Adrenal gland (tissue), 19 donors: ENCODE measurements at regions of chr2 and their contacts with region 1.

Region 1: DNA sequence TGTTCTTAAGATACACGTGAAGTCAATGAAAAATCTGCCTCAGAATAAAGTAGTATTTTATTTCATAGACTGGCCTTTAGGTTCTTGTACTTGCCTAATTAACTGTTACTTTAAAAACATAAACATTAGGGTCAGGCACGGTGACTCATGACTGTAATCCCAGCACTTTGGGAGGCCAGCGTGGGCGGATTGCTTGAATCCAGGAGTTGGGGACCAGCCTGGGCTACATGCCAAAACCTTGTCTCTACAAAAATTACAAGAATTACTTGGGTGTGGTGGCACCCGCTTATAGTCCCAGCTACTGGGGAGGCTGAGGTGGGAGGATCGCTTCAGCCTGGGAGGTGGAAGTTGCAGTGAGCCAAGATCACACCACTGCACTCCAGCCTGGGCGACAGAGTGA is 16.0 kb upstream of the SNORC start:
- DNase-seq: peak in 3 of 7 donors; percentile 51 to 54 (median 54)
- H3K4me3 ChIP-seq: no peak overlapping the region
- H3K27ac ChIP-seq: peak overlapping the region in 1 of 5 donors; percentile 18
- H3K4me1 ChIP-seq: no peaks in the 10 kb centered on the region
- H3K27me3 ChIP-seq: no peaks in the 10 kb centered on the region
- CTCF ChIP-seq: no peak
- POLR2A ChIP-seq: no peak

Region 2: GRCh38 chr2:233026192-233026813 is 172.2 kb after region 1 on chr2:
- intact Hi-C with region 1: loop called (anchors 5 to 10 kb)
- DNase-seq: no peak
- H3K4me3 ChIP-seq: no peak overlapping the region
- H3K27ac ChIP-seq: no peak overlapping the region
- H3K4me1 ChIP-seq: no peaks in the 10 kb centered on the region
- H3K27me3 ChIP-seq: no peaks in the 10 kb centered on the region
- CTCF ChIP-seq: no peak
- POLR2A ChIP-seq: no peak

Region 3: DNA sequence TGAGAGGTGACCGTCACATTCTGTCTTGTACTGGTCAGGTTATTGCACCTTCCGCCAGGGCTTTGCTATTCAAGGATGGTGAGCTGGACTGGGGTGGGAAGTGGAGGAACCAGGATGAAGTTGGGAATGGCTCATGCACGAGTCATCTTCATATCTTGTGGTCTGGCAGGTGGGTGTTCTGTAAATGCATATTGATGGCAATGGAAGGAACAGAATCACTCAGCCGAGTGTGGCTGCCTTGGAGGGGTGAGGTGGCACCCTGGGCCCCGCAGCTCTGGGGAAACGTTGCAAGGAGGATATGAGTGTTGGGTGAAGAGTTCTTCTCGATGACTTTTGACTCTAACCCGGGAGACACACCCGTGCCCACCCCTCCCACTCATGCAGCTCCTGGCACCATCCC is 179.6 kb after region 1 on chr2:
- intact Hi-C with region 1: loop called (anchors 5 to 10 kb)
- DNase-seq: peak in 1 of 7 donors; percentile 8
- H3K4me3 ChIP-seq: no peak overlapping the region
- H3K27ac ChIP-seq: no peak overlapping the region
- H3K4me1 ChIP-seq: no peaks in the 10 kb centered on the region
- H3K27me3 ChIP-seq: no peaks in the 10 kb centered on the region
- CTCF ChIP-seq: no peak
- POLR2A ChIP-seq: no peak

Region 4: DNA sequence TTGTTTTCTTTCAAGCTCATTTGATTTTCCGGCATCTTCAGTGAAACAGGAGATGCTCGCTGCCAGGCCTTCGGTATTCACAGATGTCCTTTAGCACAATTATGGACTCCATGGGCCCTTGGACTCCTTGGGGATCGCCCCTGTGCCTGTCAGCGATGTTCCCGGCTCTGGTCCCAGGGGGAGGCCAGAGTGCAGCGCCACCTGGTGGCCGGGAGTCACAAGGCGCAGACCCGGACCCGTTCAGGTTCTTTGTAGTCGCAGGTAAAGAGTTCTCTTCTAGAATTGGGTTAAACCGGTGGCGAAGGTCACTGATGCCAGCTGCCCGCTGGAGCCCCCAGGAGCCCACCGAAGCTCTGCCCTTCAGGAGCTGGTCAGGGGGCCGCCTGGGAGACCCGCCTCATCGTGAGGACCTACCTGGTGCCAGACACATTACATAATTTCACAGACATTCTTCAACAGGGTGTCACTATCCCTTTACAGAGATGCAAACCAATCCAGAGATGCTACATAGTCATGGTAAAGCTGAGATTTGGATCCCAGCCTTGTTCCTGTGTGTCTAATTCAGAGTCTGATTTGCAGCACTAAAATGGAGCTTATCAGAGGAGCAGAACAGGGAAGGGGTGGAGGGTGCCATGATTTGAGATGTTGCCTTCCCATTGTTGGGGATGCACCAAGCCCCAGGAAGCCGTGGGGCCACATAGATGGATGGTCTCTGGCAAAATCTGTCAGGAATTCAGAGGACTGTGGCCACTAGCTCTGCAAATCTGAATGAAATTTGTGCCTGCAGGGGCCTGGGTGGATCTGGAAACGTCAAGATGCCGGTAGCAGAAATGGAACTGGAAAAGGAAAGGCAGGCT is 200.1 kb after region 1 on chr2:
- intact Hi-C with region 1: loop called in 1 of 2 experiments (anchors 5 kb)
- DNase-seq: peak; percentile 50 to 77 (median 72)
- H3K4me3 ChIP-seq: no peak overlapping the region
- H3K27ac ChIP-seq: no peak overlapping the region
- H3K4me1 ChIP-seq: no peaks in the 10 kb centered on the region
- H3K27me3 ChIP-seq: no peaks in the 10 kb centered on the region
- CTCF ChIP-seq: peak; percentile 69 to 94 (median 84)
- POLR2A ChIP-seq: no peak

Region 5: DNA sequence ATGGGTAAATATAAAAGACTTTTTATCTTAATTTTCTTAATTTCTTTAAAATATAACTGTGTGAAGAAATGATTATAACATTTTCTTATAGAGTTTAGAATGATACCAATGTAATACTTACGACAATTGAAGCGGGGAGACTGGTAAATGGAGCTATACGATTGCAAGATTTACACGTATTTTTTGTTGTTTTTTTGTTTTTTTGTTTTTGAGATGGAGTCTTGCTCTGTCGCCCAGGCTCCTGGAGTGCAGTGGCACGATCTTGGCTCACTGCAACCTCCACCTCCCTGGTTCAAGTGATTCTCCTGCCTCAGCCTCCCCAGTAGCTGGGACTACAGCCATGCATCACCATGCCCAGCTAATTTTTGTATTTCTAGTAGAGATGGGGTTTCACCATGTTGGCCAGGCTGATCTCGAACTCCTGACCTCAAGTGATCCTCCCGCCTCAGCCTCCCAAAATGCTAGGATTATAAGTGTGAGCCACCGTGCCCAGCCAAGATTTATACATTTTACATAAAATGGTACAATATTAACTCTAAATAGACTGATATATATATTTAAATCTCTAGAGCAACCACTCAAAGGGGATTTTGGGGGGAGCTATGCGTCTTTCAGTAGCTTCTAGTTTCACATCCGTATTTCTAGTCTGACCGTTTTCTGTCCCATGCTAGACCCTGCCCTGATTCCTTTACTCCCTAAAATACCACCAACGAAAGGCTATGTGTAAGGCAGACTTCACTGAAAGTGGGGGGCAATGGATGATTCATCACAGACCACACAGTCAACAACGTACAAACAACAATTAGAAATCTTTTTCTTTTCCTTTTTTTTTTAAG is 369.2 kb after region 1 on chr2:
- intact Hi-C with region 1: no loop called
- DNase-seq: no peak
- H3K4me3 ChIP-seq: no peak overlapping the region
- H3K27ac ChIP-seq: no peak overlapping the region
- H3K4me1 ChIP-seq: no peaks in the 10 kb centered on the region
- H3K27me3 ChIP-seq: no peaks in the 10 kb centered on the region
- CTCF ChIP-seq: no peak
- POLR2A ChIP-seq: no peak

Region 6: GRCh38 chr2:233251306-233252116 is 397.4 kb after region 1 on chr2 and contains the start of gene ATG16L1:
- intact Hi-C with region 1: loop called (anchors 5 to 10 kb)
- DNase-seq: peak; percentile 96 to 98 (median 97)
- H3K4me3 ChIP-seq: peak within 1 kb of the TSS; percentile 26 to 84 (median 50)
- H3K27ac ChIP-seq: peak within 1 kb of the TSS; percentile 59 to 93 (median 83)
- H3K4me1 ChIP-seq: peaks cover 7 to 24% of the 10 kb centered on the region in 2 donors
- H3K27me3 ChIP-seq: no peaks in the 10 kb centered on the region
- CTCF ChIP-seq: peak; percentile 81 to 94 (median 91)
- POLR2A ChIP-seq: peak; percentile 75 to 87
- total RNA-seq, gene ATG16L1: 10.9 to 37.7 (median 23.0) TPM

Region 7: DNA sequence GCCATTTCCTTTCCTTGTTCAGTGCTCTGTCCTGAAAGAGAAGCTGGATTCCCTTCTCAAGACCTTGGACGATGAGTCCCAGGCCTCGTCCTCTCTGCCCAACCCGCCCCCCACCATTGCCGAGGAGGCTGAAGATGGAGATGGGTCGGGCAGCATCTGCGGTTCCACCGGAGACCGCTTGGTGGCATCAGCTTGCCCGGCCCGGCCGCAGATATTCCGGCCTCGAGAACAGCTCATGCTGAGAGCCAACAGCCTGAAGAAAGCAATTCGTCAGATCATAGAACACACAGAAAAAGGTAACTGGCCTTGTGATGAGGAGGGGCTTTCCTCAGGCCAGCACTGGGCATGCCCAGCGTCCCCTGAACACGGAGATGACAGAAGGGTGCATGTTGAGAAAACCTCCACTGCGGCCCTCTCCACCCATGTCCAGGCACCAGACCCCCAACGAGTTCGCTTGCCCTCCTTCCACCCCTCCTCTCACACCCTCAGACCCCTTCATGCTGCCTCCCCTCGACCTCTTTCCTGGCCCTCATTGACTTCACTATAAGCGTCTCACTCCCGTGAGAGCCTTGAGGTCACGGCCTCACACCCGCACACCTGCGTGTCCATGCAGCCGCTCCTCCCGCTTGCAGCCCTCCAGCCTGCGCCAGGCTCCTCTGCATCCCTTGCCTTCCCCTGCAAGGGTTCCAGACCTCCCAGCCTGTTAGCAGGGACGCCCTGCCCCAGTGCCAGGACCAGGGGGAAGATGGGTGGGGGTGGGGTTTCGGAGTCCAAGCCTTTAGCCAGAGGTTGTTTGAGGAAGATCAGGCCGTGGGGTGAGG is 595.2 kb after region 1 on chr2:
- intact Hi-C with region 1: no loop called
- DNase-seq: peak in 6 of 7 donors; percentile 42 to 73 (median 62)
- H3K4me3 ChIP-seq: no peak overlapping the region
- H3K27ac ChIP-seq: no peak overlapping the region
- H3K4me1 ChIP-seq: no peaks in the 10 kb centered on the region
- H3K27me3 ChIP-seq: no peaks in the 10 kb centered on the region
- CTCF ChIP-seq: peak; percentile 60 to 68 (median 64)
- POLR2A ChIP-seq: no peak